HepG2 (cell line): ENCODE measurements at regions of chr20 and their contacts with region 1.

Region 1: GRCh38 chr20:63858393-63859165 is 2.7 kb upstream of the ABHD16B start:
- DNase-seq: peak; percentile 79
- ATAC-seq: peak; percentile 45
- H3K4me3 ChIP-seq: peak overlapping the region; percentile 42 to 65 (median 46)
- H3K27ac ChIP-seq: peak overlapping the region; percentile 47
- H3K4me1 ChIP-seq: peaks cover 68% of the 10 kb centered on the region
- H3K27me3 ChIP-seq: peaks cover 3 to 11% of the 10 kb centered on the region in 2 experiments; a peak in 4 of 5 replicates
- CTCF ChIP-seq: peak; percentile 73
- EP300 ChIP-seq: peak in 1 of 2 experiments; percentile 25; a peak in 1 of 4 replicates
- POLR2A ChIP-seq: no peak
- RAD21 ChIP-seq: peak; percentile 6; the same call in 1 of the 2 replicates

Region 2: GRCh38 chr20:63664861-63665716 is 193.5 kb before region 1 on chr20:
- CTCF ChIA-PET with region 1: no interaction called
- POLR2A ChIA-PET with region 1: no interaction called
- in situ Hi-C with region 1: no loop called
- intact Hi-C with region 1: no loop called
- DNase-seq: no peak
- ATAC-seq: no peak
- H3K4me3 ChIP-seq: no peak overlapping the region
- H3K27ac ChIP-seq: no peak overlapping the region
- H3K4me1 ChIP-seq: peaks cover 7% of the 10 kb centered on the region
- H3K27me3 ChIP-seq: no peaks in the 10 kb centered on the region
- CTCF ChIP-seq: no peak
- EP300 ChIP-seq: no peak
- POLR2A ChIP-seq: no peak
- RAD21 ChIP-seq: no peak

Region 3: DNA sequence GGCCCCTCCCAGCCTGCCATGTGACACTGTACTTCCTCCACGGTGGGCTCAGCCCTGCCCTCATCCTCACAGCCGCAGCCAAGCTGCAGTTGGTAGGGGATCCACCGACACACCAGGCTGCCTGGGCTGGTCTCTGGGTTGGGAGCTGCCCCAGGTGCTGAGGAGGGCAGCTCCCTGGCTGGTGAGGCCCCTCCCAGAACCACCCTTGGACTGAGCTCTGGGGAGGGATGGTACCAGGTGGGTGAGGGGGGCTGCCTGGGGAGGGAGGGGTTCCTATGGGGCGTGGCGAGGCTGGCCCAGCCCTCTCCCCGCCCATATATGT is 162.3 kb before region 1 on chr20:
- CTCF ChIA-PET with region 1: no interaction called
- POLR2A ChIA-PET with region 1: no interaction called
- in situ Hi-C with region 1: no loop called
- intact Hi-C with region 1: no loop called
- DNase-seq: no peak
- ATAC-seq: peak; percentile 36
- H3K4me3 ChIP-seq: peak overlapping the region in 1 of 3 experiments; percentile 43; a peak in 1 of 6 replicates
- H3K27ac ChIP-seq: no peak overlapping the region
- H3K4me1 ChIP-seq: peaks cover 21% of the 10 kb centered on the region
- H3K27me3 ChIP-seq: no peaks in the 10 kb centered on the region
- CTCF ChIP-seq: no peak
- EP300 ChIP-seq: no peak
- POLR2A ChIP-seq: peak; percentile 6 to 17; a peak in 2 of 4 replicates
- RAD21 ChIP-seq: no peak

Region 4: DNA sequence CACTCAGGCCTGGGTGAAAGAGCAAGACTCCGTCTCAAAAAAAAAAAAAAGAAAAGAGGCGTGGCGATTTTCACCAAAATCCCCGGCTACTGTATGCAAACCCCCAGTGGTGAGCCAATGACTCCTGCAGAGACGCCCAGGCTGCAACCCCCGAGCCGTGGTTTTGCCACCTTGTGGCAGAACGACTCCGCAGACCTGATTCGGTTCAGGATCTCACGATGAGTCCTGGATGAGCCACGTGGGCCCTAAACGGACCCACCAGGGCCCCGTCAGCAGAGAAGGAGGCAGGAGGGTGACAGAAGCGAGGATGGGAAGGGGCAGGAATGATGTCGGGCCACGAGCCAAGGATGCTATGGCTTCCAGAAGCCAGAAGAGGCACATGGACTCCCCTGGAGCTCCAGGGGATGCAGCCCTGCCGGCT is 76.5 kb before region 1 on chr20:
- CTCF ChIA-PET with region 1: interaction called, 11 read pairs
- POLR2A ChIA-PET with region 1: interaction called, 5 read pairs
- in situ Hi-C with region 1: loop called (anchors 5 kb)
- intact Hi-C with region 1: no loop called
- DNase-seq: peak; percentile 60
- ATAC-seq: peak; percentile 84
- H3K4me3 ChIP-seq: peak overlapping the region in 1 of 3 experiments; percentile 25; a peak in 1 of 6 replicates
- H3K27ac ChIP-seq: no peak overlapping the region
- H3K4me1 ChIP-seq: peaks cover 21% of the 10 kb centered on the region
- H3K27me3 ChIP-seq: no peaks in the 10 kb centered on the region
- CTCF ChIP-seq: peak; percentile 78
- EP300 ChIP-seq: no peak
- POLR2A ChIP-seq: no peak
- RAD21 ChIP-seq: peak; percentile 66; the same call in 1 of the 2 replicates

Region 5: GRCh38 chr20:63819224-63819921 is 39.2 kb before region 1 on chr20:
- CTCF ChIA-PET with region 1: interaction called, 9 read pairs
- POLR2A ChIA-PET with region 1: interaction called, 4 read pairs
- in situ Hi-C with region 1: loop called (anchors 5 kb)
- intact Hi-C with region 1: no loop called
- DNase-seq: peak; percentile 72
- ATAC-seq: peak; percentile 78
- H3K4me3 ChIP-seq: peak overlapping the region; percentile 39 to 40 (median 40)
- H3K27ac ChIP-seq: no peak overlapping the region
- H3K4me1 ChIP-seq: peaks cover 40% of the 10 kb centered on the region
- H3K27me3 ChIP-seq: no peaks in the 10 kb centered on the region
- CTCF ChIP-seq: peak; percentile 76
- EP300 ChIP-seq: no peak
- POLR2A ChIP-seq: no peak
- RAD21 ChIP-seq: peak; percentile 52; the same call in 1 of the 2 replicates

Region 6: GRCh38 chr20:63846128-63846798 is 12.3 kb before region 1 on chr20:
- CTCF ChIA-PET with region 1: no interaction called
- POLR2A ChIA-PET with region 1: interaction called, 29 read pairs
- in situ Hi-C with region 1: no loop called
- intact Hi-C with region 1: no loop called
- DNase-seq: peak; percentile 75
- ATAC-seq: peak; percentile 51
- H3K4me3 ChIP-seq: peak overlapping the region; percentile 35 to 67 (median 43); a peak in 5 of 6 replicates
- H3K27ac ChIP-seq: no peak overlapping the region
- H3K4me1 ChIP-seq: peaks cover 41% of the 10 kb centered on the region
- H3K27me3 ChIP-seq: peaks cover 12 to 40% of the 10 kb centered on the region in 2 experiments
- CTCF ChIP-seq: peak; percentile 30
- EP300 ChIP-seq: peak in 1 of 2 experiments; percentile 59; a peak in 1 of 4 replicates
- POLR2A ChIP-seq: no peak
- RAD21 ChIP-seq: no peak

Region 7: DNA sequence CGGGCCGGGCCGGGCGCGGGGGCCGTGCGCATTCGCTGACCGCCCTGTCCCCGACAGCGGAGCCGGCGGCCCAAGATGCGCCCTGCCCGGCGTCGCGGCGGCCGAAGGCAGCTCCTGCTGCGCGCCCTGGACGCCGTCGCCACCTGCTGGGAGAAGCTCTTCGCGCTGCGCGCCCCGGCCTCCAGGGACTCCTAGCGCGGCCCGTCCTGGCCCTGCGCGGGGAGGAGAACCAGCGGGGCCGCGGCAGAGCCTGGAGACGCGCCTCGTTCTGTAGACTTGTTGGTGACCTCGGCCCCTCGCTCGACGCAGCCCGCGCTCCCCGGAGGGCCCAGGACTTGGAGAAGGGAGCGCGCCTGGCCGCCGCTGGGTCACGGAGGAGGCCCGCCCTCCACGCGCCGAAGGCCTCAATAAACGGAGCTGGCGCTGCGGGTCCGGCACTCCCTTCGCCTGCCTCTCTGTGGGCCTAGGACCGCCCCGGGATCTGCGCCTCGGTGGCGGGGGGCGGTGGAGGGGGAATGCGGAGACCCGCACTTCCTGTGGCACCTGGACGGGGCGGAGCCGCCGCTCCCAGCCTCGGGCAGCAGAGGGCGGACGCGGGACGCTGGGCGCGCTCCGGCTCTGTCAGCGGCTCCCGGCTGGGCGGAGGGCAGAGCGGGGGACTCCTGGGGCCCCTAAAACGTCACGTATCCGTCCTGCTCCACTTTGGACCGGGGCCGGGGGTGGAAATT is 180.2 kb after region 1 on chr20:
- CTCF ChIA-PET with region 1: no interaction called
- POLR2A ChIA-PET with region 1: no interaction called
- in situ Hi-C with region 1: no loop called
- intact Hi-C with region 1: no loop called
- DNase-seq: no peak
- ATAC-seq: no peak
- H3K4me3 ChIP-seq: no peak overlapping the region
- H3K27ac ChIP-seq: peak overlapping the region; percentile 45
- H3K4me1 ChIP-seq: peaks cover 71% of the 10 kb centered on the region
- H3K27me3 ChIP-seq: no peaks in the 10 kb centered on the region
- CTCF ChIP-seq: peak; percentile 27; the same call in 1 of the 2 replicates
- EP300 ChIP-seq: no peak
- POLR2A ChIP-seq: no peak
- RAD21 ChIP-seq: no peak